Common myeloid progenitor, CD34-positive (primary cell): ENCODE measurements at regions of chr18 and their contacts with region 1.

Region 1: DNA sequence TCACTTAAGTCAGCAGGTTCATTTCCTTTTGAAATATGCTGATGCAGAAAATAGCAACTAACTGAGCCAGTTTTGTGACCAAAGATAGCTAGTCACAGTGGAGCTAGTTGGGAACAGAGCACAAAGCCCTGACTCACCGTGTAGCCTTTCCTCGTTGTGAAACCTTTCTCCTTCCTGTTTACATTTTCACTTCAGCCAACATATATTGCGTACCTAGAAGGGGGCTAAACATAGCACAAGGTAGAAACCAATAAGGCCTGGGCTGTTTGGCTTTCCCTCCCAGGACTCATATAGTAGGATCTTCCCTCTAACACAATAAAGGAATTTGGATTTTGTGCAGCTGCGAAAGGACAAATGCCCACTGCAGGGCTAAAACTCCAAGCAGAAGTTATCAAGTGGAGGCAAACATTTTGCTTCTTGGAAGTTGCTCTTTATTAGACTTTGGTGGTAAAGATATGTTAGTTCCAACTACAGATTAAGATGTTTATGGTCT is 24.5 kb upstream of the LPIN2 start:
- DNase-seq: peak; percentile 45 to 77 (median 67)
- H3K4me3 ChIP-seq: no peak overlapping the region
- H3K27ac ChIP-seq: peak overlapping the region in 1 of 2 experiments; percentile 52
- H3K4me1 ChIP-seq: peaks cover 0 to 9% (median 6%) of the 10 kb centered on the region in 4 experiments
- H3K27me3 ChIP-seq: no peaks in the 10 kb centered on the region

Region 2: DNA sequence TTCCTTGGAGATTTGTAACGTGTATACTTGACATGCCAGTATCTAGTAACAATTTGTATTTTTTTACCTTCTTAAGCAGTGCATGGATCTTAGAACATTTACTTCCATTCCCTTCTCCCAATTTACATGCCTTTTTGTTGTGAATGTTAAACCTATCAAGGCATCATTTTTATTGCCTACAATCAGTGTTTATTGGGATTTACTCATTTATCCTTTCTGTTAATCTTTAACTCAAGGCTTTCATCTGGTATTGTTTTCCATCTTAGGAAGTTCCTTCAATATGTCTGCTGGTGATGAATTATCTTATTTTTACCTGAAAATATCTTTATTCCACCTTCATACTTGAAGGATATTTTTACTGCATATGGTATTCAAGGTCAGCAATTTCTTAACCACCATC is 279.2 kb before region 1 on chr18:
- CTCF ChIA-PET with region 1: no interaction called
- POLR2A ChIA-PET with region 1: no interaction called
- DNase-seq: no peak
- H3K4me3 ChIP-seq: no peak overlapping the region
- H3K27ac ChIP-seq: no peak overlapping the region
- H3K4me1 ChIP-seq: no peaks in the 10 kb centered on the region
- H3K27me3 ChIP-seq: no peaks in the 10 kb centered on the region

Region 3: DNA sequence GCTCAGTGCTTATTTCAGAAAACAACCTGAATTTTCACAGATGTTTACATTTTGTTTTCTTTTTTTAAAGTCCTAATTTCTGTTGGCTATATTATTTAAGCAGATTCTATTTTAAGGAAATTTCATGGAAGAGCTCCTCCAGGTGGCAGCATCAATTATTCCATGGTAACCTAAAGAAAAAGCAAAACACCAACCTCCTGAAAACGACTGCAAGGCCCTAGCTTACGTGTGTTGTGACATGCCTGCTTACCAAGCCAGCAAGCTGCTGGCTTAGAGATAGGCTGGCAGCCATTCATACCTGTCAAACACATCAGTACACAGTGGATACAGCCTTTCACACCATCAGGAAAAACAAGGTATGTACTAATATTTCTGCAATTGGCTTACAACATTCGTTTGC is 89.4 kb before region 1 on chr18:
- CTCF ChIA-PET with region 1: no interaction called
- POLR2A ChIA-PET with region 1: no interaction called
- DNase-seq: peak; percentile 47 to 71 (median 59)
- H3K4me3 ChIP-seq: no peak overlapping the region
- H3K27ac ChIP-seq: no peak overlapping the region
- H3K4me1 ChIP-seq: peaks cover 0 to 5% (median 0%) of the 10 kb centered on the region in 4 experiments
- H3K27me3 ChIP-seq: no peaks in the 10 kb centered on the region

Region 4: GRCh38 chr18:3015203-3015590 is 22.3 kb before region 1 on chr18:
- CTCF ChIA-PET with region 1: interaction called, 10 read pairs
- POLR2A ChIA-PET with region 1: no interaction called
- DNase-seq: peak in 1 of 3 donors; percentile 36
- H3K4me3 ChIP-seq: peak overlapping the region in 2 of 7 experiments; percentile 14 to 63
- H3K27ac ChIP-seq: peak overlapping the region in 1 of 2 experiments; percentile 54
- H3K4me1 ChIP-seq: peaks cover 34 to 79% (median 68%) of the 10 kb centered on the region in 4 experiments
- H3K27me3 ChIP-seq: no peaks in the 10 kb centered on the region